ENCODE measurements at regions of chr3 and their contacts with region 1.

Region 1: DNA sequence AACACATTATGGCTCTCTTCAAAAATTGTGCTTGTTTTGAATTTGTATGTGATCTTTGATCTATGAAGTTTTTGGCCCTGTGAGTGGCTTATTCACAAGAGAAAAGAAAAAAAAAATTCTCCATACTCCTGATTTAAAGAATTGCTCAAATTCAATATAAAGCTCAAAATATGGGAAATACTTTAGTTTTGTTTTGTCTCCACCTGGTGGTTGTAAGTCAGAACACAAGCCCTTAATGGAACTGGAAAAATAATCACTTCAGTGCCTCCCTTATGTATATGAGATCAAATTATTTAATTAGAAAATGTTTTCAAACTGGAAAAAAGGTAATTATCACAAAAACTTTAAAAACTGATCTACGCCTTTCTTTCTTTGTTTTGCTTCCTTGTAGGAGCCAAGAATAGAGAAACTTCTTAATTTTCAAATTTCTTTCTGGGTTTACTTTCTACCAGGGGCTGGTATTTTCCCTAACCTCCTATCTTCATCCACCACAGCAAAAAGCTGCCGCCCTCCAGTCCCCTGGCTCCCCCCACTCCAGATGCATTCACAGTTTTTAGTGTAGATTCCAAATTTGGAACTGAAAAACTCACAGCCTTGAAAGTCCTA is 50.6 kb downstream of the SERP1 start:
- DNase-seq: peak; percentile 49
- H3K4me3 Mint-ChIP-seq: no peak overlapping the region
- H3K27ac Mint-ChIP-seq: peak overlapping the region; percentile 20
- H3K4me1 Mint-ChIP-seq: peaks cover 31% of the 10 kb centered on the region
- H3K27me3 Mint-ChIP-seq: no peaks in the 10 kb centered on the region
- CTCF ChIP-seq: peak; percentile 64

Region 2: GRCh38 chr3:149969940-149970715 is 525.5 kb before region 1 on chr3:
- CTCF ChIA-PET with region 1: interaction called, 3 read pairs
- intact Hi-C with region 1: loop called (anchors 2 kb)
- DNase-seq: peak; percentile 91
- H3K4me3 Mint-ChIP-seq: peak overlapping the region; percentile 80
- H3K27ac Mint-ChIP-seq: peak overlapping the region; percentile 87
- H3K4me1 Mint-ChIP-seq: peaks cover 32% of the 10 kb centered on the region
- H3K27me3 Mint-ChIP-seq: no peaks in the 10 kb centered on the region
- CTCF ChIP-seq: no peak

Region 3: DNA sequence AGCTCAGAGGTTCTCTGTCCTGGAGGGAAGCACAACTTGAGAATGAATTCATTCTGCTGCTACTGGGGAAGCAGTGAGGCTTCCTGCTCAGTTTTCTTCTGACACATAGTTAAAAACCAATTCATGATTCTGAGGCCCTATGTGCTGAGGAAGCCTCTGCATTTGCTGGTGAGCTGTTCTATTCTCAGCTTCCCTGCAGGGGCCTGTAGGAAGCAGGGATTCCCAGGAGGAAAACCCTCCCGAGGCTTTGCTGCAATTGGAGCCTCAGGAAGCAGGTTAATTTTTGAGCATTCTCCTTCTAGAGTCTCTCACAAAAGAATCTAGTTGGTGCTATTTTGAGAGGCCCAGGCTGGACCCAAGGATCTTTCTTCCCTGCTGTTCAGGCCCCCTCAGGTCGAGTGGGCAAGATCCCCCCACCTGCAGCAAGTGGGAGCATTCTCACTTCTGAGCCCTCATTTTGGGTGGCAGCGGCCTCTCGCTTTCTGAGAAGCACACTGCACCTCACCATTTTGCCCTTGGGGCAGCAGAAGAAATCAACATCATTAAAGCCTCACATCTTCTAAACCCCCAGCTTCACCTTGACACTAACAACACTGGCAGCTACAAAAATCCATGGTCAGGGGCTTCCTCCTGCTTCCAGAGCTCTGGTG is 285.1 kb before region 1 on chr3:
- CTCF ChIA-PET with region 1: no interaction called
- intact Hi-C with region 1: no loop called
- DNase-seq: no peak
- H3K4me3 Mint-ChIP-seq: no peak overlapping the region
- H3K27ac Mint-ChIP-seq: no peak overlapping the region
- H3K4me1 Mint-ChIP-seq: peaks cover 4% of the 10 kb centered on the region
- H3K27me3 Mint-ChIP-seq: peaks cover 74% of the 10 kb centered on the region
- CTCF ChIP-seq: no peak

Region 4: GRCh38 chr3:150238998-150239619 is 256.6 kb before region 1 on chr3:
- CTCF ChIA-PET with region 1: interaction called, 30 read pairs
- intact Hi-C with region 1: loop called (anchors 1 kb)
- DNase-seq: peak; percentile 72
- H3K4me3 Mint-ChIP-seq: peak overlapping the region; percentile 59
- H3K27ac Mint-ChIP-seq: peak overlapping the region; percentile 45
- H3K4me1 Mint-ChIP-seq: peaks cover 21% of the 10 kb centered on the region
- H3K27me3 Mint-ChIP-seq: no peaks in the 10 kb centered on the region
- CTCF ChIP-seq: peak; percentile 90

Region 5: DNA sequence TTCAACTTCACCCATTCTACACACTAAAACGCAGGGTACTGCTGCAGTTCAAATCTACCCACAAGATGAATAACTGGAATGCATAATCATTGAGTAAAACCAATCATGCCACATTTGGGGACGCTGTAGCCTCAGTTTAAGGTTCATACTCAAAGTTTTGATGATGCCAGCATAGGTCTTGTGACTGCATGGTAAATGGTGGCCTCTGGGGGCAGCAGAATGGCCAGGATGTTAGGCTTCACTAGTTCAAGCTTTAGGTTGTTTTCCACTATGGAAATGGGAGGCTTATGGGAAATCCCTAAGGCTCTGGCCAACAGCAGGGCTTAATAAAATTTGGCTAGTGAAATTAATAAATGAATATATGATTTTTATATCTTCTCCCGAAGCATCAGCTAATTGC is 191.9 kb before region 1 on chr3:
- CTCF ChIA-PET with region 1: interaction called, 5 read pairs
- intact Hi-C with region 1: loop called (anchors 5 kb)
- DNase-seq: peak; percentile 57
- H3K4me3 Mint-ChIP-seq: no peak overlapping the region
- H3K27ac Mint-ChIP-seq: no peak overlapping the region
- H3K4me1 Mint-ChIP-seq: peaks cover 31% of the 10 kb centered on the region
- H3K27me3 Mint-ChIP-seq: no peaks in the 10 kb centered on the region
- CTCF ChIP-seq: peak; percentile 50

Region 6: DNA sequence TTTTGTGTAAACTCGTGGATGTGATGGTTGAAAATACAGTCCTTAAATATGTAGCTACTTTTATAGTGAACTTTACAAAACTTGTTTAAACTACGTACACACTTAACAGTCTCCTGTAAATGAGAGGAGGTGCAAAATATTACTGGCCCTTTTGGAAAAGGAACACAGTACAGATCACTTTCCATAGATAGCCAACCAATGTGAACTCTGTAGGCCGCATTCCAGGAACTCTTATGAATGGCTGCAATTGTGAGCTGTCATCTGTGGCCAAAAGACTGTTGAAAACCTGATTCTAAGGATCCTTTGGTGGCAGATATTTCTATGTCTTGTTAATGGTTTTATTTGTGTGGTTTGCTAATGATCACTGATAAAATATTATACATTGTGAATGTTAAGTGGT is 81.4 kb before region 1 on chr3:
- CTCF ChIA-PET with region 1: interaction called, 34 read pairs
- intact Hi-C with region 1: loop called (anchors 1 kb)
- DNase-seq: peak; percentile 34
- H3K4me3 Mint-ChIP-seq: peak overlapping the region; percentile 74
- H3K27ac Mint-ChIP-seq: peak overlapping the region; percentile 18
- H3K4me1 Mint-ChIP-seq: peaks cover 53% of the 10 kb centered on the region
- H3K27me3 Mint-ChIP-seq: no peaks in the 10 kb centered on the region
- CTCF ChIP-seq: no peak

Region 7: DNA sequence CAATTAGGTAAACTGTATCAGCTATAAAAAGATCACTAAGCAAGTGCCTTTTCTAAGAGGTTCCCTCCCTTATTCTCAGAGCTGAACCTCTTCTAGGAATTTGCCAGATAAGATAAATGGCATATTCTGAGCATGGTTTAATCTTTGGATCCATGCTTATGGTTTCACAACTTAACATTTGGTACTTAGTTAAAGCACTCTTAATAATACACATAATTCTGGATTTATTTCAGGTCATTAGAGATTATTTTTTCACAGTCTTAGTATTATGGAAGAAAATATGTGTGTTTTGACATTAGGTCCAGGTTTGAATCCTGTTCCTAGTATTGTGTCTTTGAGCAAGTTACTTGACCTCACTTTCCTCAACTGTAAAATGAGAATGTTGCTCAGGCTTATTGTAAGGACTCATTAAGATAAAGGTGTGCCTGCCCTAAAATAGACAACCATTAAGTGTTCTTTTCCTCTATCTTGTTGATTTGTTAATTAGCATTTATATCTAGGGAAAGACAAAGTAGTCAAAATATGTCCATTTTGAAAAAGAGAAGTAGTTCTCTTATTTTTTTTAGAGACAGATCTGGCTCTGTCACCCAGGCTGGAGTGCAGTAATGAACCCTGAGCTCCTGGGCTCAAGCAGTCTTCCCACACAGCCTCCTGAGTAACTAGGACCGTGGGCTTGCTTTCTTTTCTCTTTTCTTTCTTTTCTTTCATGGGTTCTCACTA is 44.2 kb before region 1 on chr3:
- CTCF ChIA-PET with region 1: no interaction called
- intact Hi-C with region 1: no loop called
- DNase-seq: no peak
- H3K4me3 Mint-ChIP-seq: no peak overlapping the region
- H3K27ac Mint-ChIP-seq: no peak overlapping the region
- H3K4me1 Mint-ChIP-seq: peaks cover 34% of the 10 kb centered on the region
- H3K27me3 Mint-ChIP-seq: no peaks in the 10 kb centered on the region
- CTCF ChIP-seq: no peak